ENCODE measurements at regions of chr2 and their contacts with region 1.

Region 1: DNA sequence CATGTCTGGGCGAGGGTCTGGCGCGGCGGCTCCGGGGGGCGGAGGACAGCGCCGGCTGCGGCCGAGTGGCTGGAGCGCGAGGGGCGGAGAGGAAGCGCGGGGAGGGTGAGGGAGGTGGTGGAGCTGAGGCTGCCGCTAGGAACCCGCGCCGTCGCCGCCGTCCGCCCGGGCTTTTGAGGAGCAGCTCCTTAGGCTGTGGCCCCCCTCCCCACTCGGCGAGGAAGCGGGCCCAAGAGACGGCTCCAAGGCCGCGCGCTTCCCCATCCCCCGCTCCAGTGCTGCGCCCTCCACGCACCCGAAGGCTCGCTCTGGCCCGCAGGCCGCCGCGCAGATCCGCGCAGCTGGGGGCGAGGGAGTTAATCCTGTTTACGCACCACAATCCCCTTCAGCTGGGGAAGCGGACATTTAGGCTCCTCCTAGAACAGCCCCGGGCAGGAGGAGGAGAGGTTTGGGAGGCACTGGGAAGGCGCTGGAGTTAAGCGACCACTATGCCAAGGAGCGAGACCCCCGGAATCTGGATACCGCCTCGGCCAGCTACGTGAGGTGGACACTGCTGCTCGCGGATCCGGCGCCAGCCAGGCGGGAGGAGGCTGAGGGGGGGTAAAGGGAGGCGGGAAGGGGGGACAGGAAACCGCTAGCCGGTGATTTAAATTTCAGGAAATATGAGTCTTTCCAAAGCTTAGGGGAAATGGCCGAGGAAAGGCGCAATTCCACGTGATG is at the start of gene CNRIP1:
- DNase-seq: peak; percentile 88
- H3K4me3 ChIP-seq: peak within 1 kb of the TSS; percentile 67
- H3K27ac ChIP-seq: peak within 1 kb of the TSS; percentile 85
- H3K4me1 ChIP-seq: peaks cover 10% of the 10 kb centered on the region
- H3K27me3 ChIP-seq: no peaks in the 10 kb centered on the region
- CTCF ChIP-seq: no peak
- total RNA-seq, gene CNRIP1: 18.4 and 22.2 TPM in 2 replicates

Region 2: DNA sequence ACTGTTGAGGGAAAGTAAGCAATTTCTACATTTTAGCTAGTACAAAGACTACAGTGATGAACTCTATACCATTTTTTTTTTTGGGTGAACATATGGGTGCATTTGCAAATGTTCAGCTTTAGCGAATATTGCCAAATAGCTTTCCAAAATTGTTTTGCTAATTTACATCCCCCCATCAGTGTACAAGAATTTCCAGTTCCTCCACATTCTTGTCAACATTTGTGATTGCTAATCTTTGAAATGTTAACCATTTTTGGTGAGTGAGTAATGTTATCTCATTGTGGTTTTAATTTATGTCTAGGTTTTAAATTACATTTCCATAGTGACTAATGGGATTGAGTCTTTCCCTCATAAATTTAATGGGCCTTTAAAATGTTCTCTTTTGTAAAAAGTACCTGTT is 16.6 kb after region 1 on chr2:
- CTCF ChIA-PET with region 1: no interaction called
- POLR2A ChIA-PET with region 1: interaction called, 14 read pairs
- intact Hi-C with region 1: no loop called
- DNase-seq: peak; percentile 28
- H3K4me3 ChIP-seq: no peak overlapping the region
- H3K27ac ChIP-seq: no peak overlapping the region
- H3K4me1 ChIP-seq: no peaks in the 10 kb centered on the region
- H3K27me3 ChIP-seq: peaks cover 23% of the 10 kb centered on the region
- CTCF ChIP-seq: no peak

Measured in A673 (cell line).